HEK293 (cell line): ENCODE measurements at regions of chr19 and their contacts with region 1.

Region 1: DNA sequence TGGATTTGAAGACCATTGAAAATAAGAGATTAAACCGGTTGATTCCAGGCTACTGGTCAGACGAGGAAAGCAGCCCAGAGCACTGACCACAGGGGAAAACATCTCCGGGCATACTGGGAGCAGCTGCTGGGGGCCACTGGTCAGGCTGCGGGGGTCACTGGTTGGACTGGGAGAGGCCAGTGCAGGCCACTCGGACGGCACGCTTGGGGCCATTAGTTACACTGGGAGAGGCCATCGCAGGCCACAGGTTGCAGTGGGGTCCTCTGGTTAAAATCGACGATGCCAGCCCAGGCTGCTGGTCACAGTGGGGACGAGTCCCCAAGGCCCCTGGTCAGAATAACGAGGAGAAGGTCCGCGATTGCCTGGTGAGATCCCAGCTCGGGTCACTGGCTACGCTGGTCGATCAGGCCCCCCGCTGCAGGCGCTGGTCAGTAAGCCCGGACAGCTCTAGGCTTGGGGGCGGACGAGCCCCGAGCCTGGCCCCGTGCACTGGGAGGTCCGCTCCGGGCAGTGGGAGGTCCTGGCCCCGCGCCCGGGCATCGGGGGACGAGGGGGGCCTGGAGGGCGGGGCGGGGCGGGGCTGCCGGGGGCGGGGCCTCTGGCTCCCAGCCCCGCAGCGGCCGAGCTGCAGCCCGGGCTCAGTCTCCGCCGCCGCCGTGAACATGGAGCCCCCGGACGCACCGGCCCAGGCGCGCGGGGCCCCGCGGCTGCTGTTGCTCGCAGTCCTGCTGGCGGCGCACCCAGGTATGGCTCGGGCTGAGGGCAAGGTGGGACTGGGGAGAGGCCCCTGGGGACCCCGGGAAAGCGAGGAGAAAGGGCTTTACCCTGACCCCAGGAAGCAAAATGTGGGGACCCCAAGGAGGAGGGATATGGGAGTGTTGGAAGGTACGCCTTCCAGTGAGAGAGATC is at the start of gene BCAM:
- H3K4me3 ChIP-seq: peak within 1 kb of the TSS; percentile 58
- H3K27ac ChIP-seq: peak within 1 kb of the TSS; percentile 64; the same call in 1 of the 2 replicates
- H3K4me1 ChIP-seq: peaks cover 8% of the 10 kb centered on the region
- CTCF ChIP-seq: no peak

Region 2: GRCh38 chr19:44708940-44709339 is 99.8 kb before region 1 on chr19:
- CTCF ChIA-PET with region 1: no interaction called
- POLR2A ChIA-PET with region 1: no interaction called
- H3K4me3 ChIP-seq: no peak overlapping the region
- H3K27ac ChIP-seq: no peak overlapping the region
- H3K4me1 ChIP-seq: no peaks in the 10 kb centered on the region
- CTCF ChIP-seq: no peak

Region 3: GRCh38 chr19:44782729-44783128 is 26.0 kb before region 1 on chr19:
- CTCF ChIA-PET with region 1: interaction called, 18 read pairs
- POLR2A ChIA-PET with region 1: interaction called, 6 read pairs
- H3K4me3 ChIP-seq: no peak overlapping the region
- H3K27ac ChIP-seq: no peak overlapping the region
- H3K4me1 ChIP-seq: no peaks in the 10 kb centered on the region
- CTCF ChIP-seq: no peak

Region 4: DNA sequence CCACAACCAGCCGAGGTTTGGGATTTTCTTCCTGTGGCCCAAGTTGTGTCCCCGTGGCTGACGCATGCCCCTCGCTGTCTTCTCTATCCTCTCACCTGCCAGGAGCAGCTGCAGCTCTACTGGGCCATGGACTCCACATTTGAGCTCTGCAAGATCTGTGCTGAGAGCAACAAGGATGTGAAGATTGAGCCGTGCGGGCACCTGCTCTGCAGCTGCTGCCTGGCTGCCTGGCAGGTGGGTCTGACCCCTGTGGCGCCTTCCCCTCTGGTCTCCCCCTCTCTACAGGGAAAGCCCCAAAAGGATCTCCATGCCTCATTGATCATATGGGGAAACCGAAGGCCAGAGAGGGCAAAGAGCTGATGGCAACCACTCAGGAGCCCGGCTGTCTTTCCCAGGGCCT is 16.4 kb before region 1 on chr19:
- CTCF ChIA-PET with region 1: interaction called, 17 read pairs
- POLR2A ChIA-PET with region 1: interaction called, 8 read pairs
- H3K4me3 ChIP-seq: no peak overlapping the region
- H3K27ac ChIP-seq: no peak overlapping the region
- H3K4me1 ChIP-seq: no peaks in the 10 kb centered on the region; the same call in 1 of the 2 replicates
- CTCF ChIP-seq: no peak

Region 5: DNA sequence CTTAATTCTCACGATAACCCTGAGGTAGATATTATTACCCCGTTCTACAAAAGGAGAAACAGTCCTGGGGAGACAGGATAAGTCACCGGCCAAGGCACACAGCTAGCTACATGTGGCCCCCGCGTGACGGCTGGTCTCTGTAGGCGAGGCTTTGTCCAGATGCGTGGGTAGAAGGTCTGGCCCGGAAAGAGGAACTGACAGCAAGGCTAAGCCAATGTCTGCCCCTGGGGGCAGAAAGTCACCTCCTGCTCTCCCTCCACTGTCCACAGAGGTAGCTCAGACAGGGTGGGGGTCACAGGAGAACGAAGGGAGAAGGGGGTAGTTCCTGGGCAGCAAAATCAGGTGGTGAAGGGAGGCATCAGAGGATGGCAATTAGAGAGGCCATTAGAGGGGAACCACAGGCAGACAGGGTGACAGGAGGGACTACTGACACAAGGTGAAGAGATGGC is 135.1 kb after region 1 on chr19:
- CTCF ChIA-PET with region 1: no interaction called
- POLR2A ChIA-PET with region 1: no interaction called
- H3K4me3 ChIP-seq: no peak overlapping the region
- H3K27ac ChIP-seq: no peak overlapping the region
- H3K4me1 ChIP-seq: no peaks in the 10 kb centered on the region
- CTCF ChIP-seq: no peak